BJ (cell line): ENCODE measurements at regions of chr3 and their contacts with region 1.

Region 1: DNA sequence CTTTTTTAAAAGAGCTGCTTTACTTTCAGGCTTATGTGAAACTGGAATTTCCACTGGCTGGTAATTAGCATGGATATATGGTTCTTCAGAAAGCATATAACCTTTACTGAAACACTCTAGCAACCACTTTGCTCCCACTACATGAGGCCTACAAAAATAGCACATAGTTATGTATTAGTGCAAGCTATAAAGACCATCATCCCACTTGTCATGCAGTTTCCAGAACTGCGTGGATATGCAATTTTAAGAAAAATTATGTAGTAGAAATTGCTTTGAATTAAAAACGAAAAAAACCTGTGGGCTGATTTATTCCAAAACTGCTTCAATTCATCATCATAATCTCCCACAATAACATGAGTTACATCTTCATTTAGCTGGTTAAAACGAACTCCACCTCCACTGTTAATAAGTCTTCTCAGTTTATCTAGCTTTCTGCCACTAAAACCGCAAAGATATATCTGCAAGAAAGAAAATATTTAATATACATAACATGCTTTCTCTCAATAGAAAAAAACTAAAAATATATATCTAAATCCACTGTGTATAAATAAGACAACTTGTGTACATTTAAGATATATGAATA is 12.2 kb downstream of the TOPBP1 start:
- DNase-seq: no peak
- H3K4me3 ChIP-seq: no peak overlapping the region
- H3K27me3 ChIP-seq: no peaks in the 10 kb centered on the region
- CTCF ChIP-seq: no peak

Region 2: GRCh38 chr3:133573054-133573628 is 76.4 kb before region 1 on chr3:
- CTCF ChIA-PET with region 1: no interaction called
- POLR2A ChIA-PET with region 1: interaction called, 12 read pairs
- DNase-seq: peak; percentile 100
- H3K4me3 ChIP-seq: peak overlapping the region; percentile 91
- H3K27me3 ChIP-seq: no peaks in the 10 kb centered on the region
- CTCF ChIP-seq: peak; percentile 33

Region 3: GRCh38 chr3:133591271-133591742 is 58.3 kb before region 1 on chr3:
- CTCF ChIA-PET with region 1: no interaction called
- POLR2A ChIA-PET with region 1: no interaction called
- DNase-seq: no peak
- H3K4me3 ChIP-seq: no peak overlapping the region
- H3K27me3 ChIP-seq: no peaks in the 10 kb centered on the region
- CTCF ChIP-seq: no peak

Region 4: GRCh38 chr3:133661454-133662277 is 12.1 kb after region 1 on chr3 and contains the start of gene TOPBP1:
- CTCF ChIA-PET with region 1: interaction called, 10 read pairs
- POLR2A ChIA-PET with region 1: no interaction called
- DNase-seq: no peak
- H3K4me3 ChIP-seq: peak within 1 kb of the TSS; percentile 75
- H3K27me3 ChIP-seq: no peaks in the 10 kb centered on the region
- CTCF ChIP-seq: no peak
- polyA plus RNA-seq, gene TOPBP1: 18.9 and 22.1 TPM in 2 replicates

Region 5: GRCh38 chr3:133831966-133832802 is 182.6 kb after region 1 on chr3:
- CTCF ChIA-PET with region 1: no interaction called
- POLR2A ChIA-PET with region 1: no interaction called
- DNase-seq: no peak
- H3K4me3 ChIP-seq: no peak overlapping the region
- H3K27me3 ChIP-seq: peaks cover 3% of the 10 kb centered on the region
- CTCF ChIP-seq: no peak